Right ventricle myocardium inferior (tissue), 1 donor: ENCODE measurements at regions of chr12 and their contacts with region 1.

Region 1: GRCh38 chr12:110100315-110100970 is 23.7 kb upstream of the IFT81 start:
- DNase-seq: no peak
- ATAC-seq: peak; percentile 66

Region 2: GRCh38 chr12:109952160-109952858 is 148.1 kb before region 1 on chr12:
- intact Hi-C with region 1: no loop called
- DNase-seq: no peak
- ATAC-seq: peak; percentile 27

Region 3: DNA sequence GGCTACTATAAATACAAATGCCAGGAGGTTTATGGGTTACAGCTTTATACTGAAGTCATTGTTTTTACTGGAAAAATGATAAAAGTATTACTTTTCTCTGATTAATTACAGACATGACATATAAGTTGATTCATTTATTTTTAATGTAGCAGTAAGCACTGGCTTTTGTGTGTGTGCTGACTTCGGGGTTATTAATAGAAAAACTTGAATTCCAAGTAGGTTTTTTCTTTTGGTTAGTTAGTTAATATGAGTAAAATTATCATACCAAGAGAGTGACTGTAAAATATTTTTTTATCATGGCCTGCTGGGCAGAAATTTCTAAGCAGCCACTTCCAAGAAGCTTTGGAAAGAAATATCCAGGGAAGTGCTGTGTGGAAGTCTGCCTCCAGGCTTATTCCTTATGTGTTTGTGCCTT is 80.2 kb after region 1 on chr12:
- intact Hi-C with region 1: loop called (anchors 5 kb)
- DNase-seq: no peak
- ATAC-seq: no peak

Region 4: GRCh38 chr12:110280779-110281548 is 180.5 kb after region 1 on chr12 and contains the start of gene ATP2A2:
- intact Hi-C with region 1: loop called (anchors 10 kb)
- DNase-seq: peak; percentile 96
- ATAC-seq: peak; percentile 93
- total RNA-seq, gene ATP2A2: 3,009 TPM

Region 5: GRCh38 chr12:110431957-110432587 is 331.6 kb after region 1 on chr12:
- intact Hi-C with region 1: loop called (anchors 1 kb)
- DNase-seq: no peak
- ATAC-seq: no peak